PC-3 (cell line): ENCODE measurements at regions of chr12 and their contacts with region 1.

Region 1: GRCh38 chr12:6778574-6779550 is 6.5 kb downstream of the LAG3 start:
- DNase-seq: peak; percentile 91
- ATAC-seq: peak; percentile 95
- H3K4me3 ChIP-seq: peak overlapping the region; percentile 68
- H3K27ac ChIP-seq: no peak overlapping the region
- H3K4me1 ChIP-seq: peaks cover 4% of the 10 kb centered on the region; the same call in 1 of the 2 replicates
- H3K27me3 ChIP-seq: no peaks in the 10 kb centered on the region
- CTCF ChIP-seq: peak; percentile 87

Region 2: GRCh38 chr12:6735448-6736191 is 43.2 kb before region 1 on chr12:
- CTCF ChIA-PET with region 1: no interaction called
- POLR2A ChIA-PET with region 1: no interaction called
- intact Hi-C with region 1: loop called (anchors 1 kb)
- DNase-seq: peak; percentile 63
- ATAC-seq: peak; percentile 99
- H3K4me3 ChIP-seq: no peak overlapping the region
- H3K27ac ChIP-seq: peak overlapping the region; percentile 21; the same call in 1 of the 2 replicates
- H3K4me1 ChIP-seq: peaks cover 5% of the 10 kb centered on the region
- H3K27me3 ChIP-seq: no peaks in the 10 kb centered on the region
- CTCF ChIP-seq: peak; percentile 86

Region 3: DNA sequence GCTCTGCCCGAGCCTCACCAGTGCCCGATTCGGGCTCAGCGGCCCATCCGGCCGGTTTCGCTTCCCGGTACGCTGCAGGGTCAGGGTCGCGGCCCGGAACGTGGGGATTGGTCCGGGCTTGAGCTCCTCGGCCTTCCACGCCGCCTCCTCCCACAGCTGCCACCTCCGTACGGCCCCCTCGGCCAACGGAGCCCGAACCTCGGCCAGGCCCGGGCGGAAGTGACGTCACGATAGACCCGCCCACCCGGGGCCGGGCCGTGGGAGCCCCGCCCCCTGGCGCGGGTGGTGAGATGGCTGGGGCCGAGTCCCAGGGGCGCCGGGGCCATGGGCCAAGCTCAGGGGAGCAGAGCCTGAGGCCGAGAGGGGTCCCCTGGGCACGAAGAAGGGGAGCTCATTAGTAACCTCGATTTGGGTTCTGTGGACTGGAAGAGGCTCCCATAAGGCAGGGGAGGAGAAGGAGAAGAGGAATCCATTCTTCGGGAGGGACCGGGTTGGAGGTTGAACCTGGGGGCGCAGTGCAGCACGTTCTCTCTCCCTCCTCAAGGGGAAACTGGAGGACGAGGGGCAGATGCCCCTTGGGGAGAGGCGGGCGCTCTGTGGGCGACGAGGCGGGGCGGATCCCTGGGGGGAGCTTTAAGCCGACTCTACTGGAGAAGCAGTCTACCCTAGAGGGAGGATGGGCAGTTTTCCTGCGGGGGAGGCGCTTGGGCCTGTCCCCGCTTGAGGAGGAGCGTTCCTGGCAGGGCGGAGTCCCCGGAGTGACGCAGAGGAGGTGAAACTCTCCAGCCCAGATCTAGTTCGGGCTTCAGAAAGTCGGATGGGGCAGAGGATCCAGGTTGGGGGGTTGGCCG is 25.7 kb before region 1 on chr12 and contains the start of gene MLF2:
- CTCF ChIA-PET with region 1: interaction called, 5 read pairs
- POLR2A ChIA-PET with region 1: interaction called, 7 read pairs
- intact Hi-C with region 1: loop called (anchors 1 kb)
- DNase-seq: peak; percentile 95
- ATAC-seq: peak; percentile 92
- H3K4me3 ChIP-seq: peak within 1 kb of the TSS; percentile 91
- H3K27ac ChIP-seq: peak within 1 kb of the TSS; percentile 89
- H3K4me1 ChIP-seq: peaks cover 12% of the 10 kb centered on the region
- H3K27me3 ChIP-seq: no peaks in the 10 kb centered on the region
- CTCF ChIP-seq: peak; percentile 88; the same call in 1 of the 2 replicates
- total RNA-seq, gene MLF2: 222 and 248 TPM in 2 replicates

Region 4: DNA sequence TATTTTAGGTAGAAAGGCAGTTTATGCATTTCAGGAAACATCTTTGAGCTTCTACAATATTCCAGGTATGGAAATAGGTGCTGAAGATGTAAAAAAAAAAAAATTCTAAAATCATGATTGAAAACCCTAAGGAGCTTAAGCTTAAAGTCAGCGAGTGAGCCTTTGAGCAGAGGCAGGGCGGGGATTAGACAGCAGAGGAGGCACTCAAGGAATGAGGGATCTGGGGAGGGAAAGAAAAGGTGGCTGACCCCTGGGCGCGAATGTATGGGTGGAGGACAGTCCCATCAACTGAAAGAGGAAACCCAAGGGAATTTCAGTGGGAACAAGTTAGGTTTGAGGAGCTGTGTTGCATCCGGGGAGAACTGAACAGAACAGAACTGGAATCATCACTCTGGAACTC is 19.1 kb before region 1 on chr12:
- CTCF ChIA-PET with region 1: interaction called, 10 read pairs
- POLR2A ChIA-PET with region 1: no interaction called
- intact Hi-C with region 1: no loop called
- DNase-seq: no peak
- ATAC-seq: no peak
- H3K4me3 ChIP-seq: no peak overlapping the region
- H3K27ac ChIP-seq: no peak overlapping the region
- H3K4me1 ChIP-seq: peaks cover 12% of the 10 kb centered on the region; the same call in 1 of the 2 replicates
- H3K27me3 ChIP-seq: no peaks in the 10 kb centered on the region
- CTCF ChIP-seq: no peak

Region 5: GRCh38 chr12:6766651-6767349 is 12.1 kb before region 1 on chr12:
- CTCF ChIA-PET with region 1: interaction called, 10 read pairs
- POLR2A ChIA-PET with region 1: no interaction called
- intact Hi-C with region 1: no loop called
- DNase-seq: peak; percentile 68
- ATAC-seq: peak; percentile 49
- H3K4me3 ChIP-seq: peak overlapping the region; percentile 89
- H3K27ac ChIP-seq: peak overlapping the region; percentile 9; the same call in 1 of the 2 replicates
- H3K4me1 ChIP-seq: peaks cover 36% of the 10 kb centered on the region
- H3K27me3 ChIP-seq: no peaks in the 10 kb centered on the region
- CTCF ChIP-seq: peak; percentile 52